Heart left ventricle (tissue), 16 donors: ENCODE measurements at regions of chr13 and their contacts with region 1.

Region 1: GRCh38 chr13:50801087-50801931 is 42.2 kb downstream of the DLEU7 start:
- DNase-seq: peak in 4 of 5 donors; percentile 41 to 73 (median 58)
- ATAC-seq: peak; percentile 87 to 96 (median 94)
- H3K4me3 ChIP-seq: peak overlapping the region in 4 of 12 donors; percentile 12 to 22 (median 16)
- H3K27ac ChIP-seq: peak overlapping the region in 7 of 12 donors; percentile 0 to 72 (median 32)
- H3K4me1 ChIP-seq: peaks cover 0 to 32% (median 20%) of the 10 kb centered on the region in 12 donors
- H3K27me3 ChIP-seq: no peaks in the 10 kb centered on the region
- CTCF ChIP-seq: peak; percentile 66 to 84 (median 78)
- POLR2A ChIP-seq: no peak

Region 2: GRCh38 chr13:50170447-50171037 is 630.8 kb before region 1 on chr13:
- intact Hi-C with region 1: loop called in 6 of 10 experiments (anchors 5 to 10 kb)
- DNase-seq: no peak
- ATAC-seq: no peak
- H3K4me3 ChIP-seq: no peak overlapping the region
- H3K27ac ChIP-seq: no peak overlapping the region
- H3K4me1 ChIP-seq: peaks cover 0 to 4% (median 0%) of the 10 kb centered on the region in 12 donors
- H3K27me3 ChIP-seq: no peaks in the 10 kb centered on the region
- CTCF ChIP-seq: peak in 9 of 12 donors; percentile 24 to 56 (median 47)
- POLR2A ChIP-seq: no peak

Region 3: DNA sequence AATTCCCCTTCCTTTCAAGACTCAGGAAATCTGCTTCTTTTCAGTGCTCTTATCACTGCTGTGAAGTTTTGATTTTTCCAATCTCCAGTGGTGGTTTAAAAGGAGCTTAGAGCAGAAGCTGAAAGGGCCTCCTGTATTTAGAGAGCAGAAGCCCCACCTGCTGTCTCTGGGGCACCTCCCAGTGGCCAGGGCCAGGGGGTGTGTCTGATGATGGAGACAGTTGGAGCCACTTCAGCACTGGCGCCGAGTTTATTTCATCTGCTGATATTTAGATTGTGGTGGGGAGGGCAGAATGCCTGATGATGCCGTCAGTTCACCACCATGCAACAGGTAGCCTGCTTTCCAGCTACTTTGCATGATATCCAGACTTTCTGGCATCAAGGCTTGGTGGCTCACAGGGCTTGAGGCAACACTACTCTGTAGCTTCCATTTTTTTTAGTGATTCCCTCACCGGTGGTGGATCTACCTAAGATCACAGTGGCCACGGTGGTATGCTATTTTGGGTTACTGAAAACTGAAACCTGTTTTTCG is 414.2 kb before region 1 on chr13:
- intact Hi-C with region 1: loop called in 3 of 10 experiments (anchors 5 to 10 kb)
- DNase-seq: peak; percentile 61 to 77 (median 68)
- ATAC-seq: peak; percentile 89 to 96 (median 95)
- H3K4me3 ChIP-seq: peak overlapping the region in 10 of 12 donors; percentile 10 to 50 (median 37)
- H3K27ac ChIP-seq: peak overlapping the region in 11 of 12 donors; percentile 33 to 86 (median 69)
- H3K4me1 ChIP-seq: peaks cover 0 to 20% (median 2%) of the 10 kb centered on the region in 12 donors
- H3K27me3 ChIP-seq: no peaks in the 10 kb centered on the region
- CTCF ChIP-seq: peak in 11 of 12 donors; percentile 8 to 53 (median 23)
- POLR2A ChIP-seq: no peak

Region 4: GRCh38 chr13:50589139-50589538 is 212.2 kb before region 1 on chr13:
- intact Hi-C with region 1: loop called in 2 of 10 experiments (anchors 5 to 10 kb)
- DNase-seq: peak in 1 of 5 donors; percentile 35
- ATAC-seq: peak in 3 of 4 donors; percentile 29 to 60 (median 40)
- H3K4me3 ChIP-seq: no peak overlapping the region
- H3K27ac ChIP-seq: peak overlapping the region in 1 of 12 donors; percentile 26
- H3K4me1 ChIP-seq: peaks cover 0 to 36% (median 11%) of the 10 kb centered on the region in 12 donors
- H3K27me3 ChIP-seq: no peaks in the 10 kb centered on the region
- CTCF ChIP-seq: no peak
- POLR2A ChIP-seq: no peak

Region 5: DNA sequence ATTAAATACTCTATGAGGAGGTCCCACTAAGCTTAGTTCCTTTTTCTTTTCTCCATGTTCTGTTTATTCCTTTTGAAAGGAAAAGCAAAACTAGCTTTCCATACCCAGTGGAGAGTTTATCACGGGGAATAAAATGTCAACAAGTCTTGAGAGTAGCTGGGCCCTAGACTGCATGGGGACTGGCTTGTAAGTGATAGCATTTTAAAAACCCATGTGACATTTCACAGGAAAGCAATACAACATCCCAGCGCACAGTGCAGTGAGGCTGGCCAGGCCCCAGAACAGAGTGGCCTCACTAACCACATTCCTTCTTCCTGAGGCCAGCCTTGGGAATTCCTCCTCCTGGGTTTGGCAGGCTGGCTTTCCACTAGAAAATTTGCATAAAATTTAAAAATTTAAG is 107.6 kb before region 1 on chr13:
- intact Hi-C with region 1: loop called in 1 of 10 experiments (anchors 10 kb)
- DNase-seq: peak; percentile 66 to 78 (median 72)
- ATAC-seq: peak; percentile 94 to 97 (median 96)
- H3K4me3 ChIP-seq: no peak overlapping the region
- H3K27ac ChIP-seq: peak overlapping the region; percentile 56 to 82 (median 76)
- H3K4me1 ChIP-seq: peaks cover 3 to 68% (median 44%) of the 10 kb centered on the region in 12 donors
- H3K27me3 ChIP-seq: no peaks in the 10 kb centered on the region
- CTCF ChIP-seq: no peak
- POLR2A ChIP-seq: no peak

Region 6: GRCh38 chr13:50873467-50873866 is 72.2 kb after region 1 on chr13:
- intact Hi-C with region 1: no loop called
- DNase-seq: no peak
- ATAC-seq: no peak
- H3K4me3 ChIP-seq: no peak overlapping the region
- H3K27ac ChIP-seq: no peak overlapping the region
- H3K4me1 ChIP-seq: no peaks in the 10 kb centered on the region
- H3K27me3 ChIP-seq: no peaks in the 10 kb centered on the region
- CTCF ChIP-seq: no peak
- POLR2A ChIP-seq: no peak